ENCODE measurements at regions of chr2 and their contacts with region 1.

Region 1: DNA sequence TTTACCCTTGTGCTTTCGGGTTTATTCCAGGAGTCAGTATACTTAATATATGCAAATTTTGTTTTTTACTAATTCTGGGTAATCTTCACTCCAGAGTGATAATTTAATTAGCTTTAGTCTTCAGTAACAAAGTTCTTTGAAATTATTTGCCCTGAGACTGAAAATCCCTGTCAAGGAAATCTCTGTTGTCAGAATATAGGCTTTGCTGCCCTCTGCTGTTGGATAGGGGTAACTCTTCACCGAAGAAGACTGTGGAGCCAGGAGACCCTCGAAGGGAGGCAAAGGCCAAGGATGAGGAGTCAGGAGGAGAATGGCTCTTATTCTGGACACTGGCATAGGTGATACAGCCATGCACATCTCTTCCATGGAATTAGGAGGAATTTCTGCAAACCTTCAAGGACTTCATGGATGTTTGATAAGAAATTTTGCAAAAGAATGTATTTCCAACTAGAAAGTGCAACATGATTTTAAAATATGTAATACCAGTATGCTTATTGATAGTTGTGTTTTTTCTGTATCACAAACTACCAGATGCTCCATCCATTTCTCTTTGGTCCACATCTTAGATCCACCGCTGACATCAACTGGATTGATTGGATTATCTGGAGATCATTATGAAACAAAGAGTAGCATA is 182.3 kb downstream of the RDH14 start:
- DNase-seq: peak; percentile 19
- H3K4me3 ChIP-seq: no peak overlapping the region
- H3K27ac ChIP-seq: no peak overlapping the region
- H3K4me1 ChIP-seq: peaks cover 2% of the 10 kb centered on the region
- H3K27me3 ChIP-seq: no peaks in the 10 kb centered on the region
- CTCF ChIP-seq: peak; percentile 75 to 83

Region 2: DNA sequence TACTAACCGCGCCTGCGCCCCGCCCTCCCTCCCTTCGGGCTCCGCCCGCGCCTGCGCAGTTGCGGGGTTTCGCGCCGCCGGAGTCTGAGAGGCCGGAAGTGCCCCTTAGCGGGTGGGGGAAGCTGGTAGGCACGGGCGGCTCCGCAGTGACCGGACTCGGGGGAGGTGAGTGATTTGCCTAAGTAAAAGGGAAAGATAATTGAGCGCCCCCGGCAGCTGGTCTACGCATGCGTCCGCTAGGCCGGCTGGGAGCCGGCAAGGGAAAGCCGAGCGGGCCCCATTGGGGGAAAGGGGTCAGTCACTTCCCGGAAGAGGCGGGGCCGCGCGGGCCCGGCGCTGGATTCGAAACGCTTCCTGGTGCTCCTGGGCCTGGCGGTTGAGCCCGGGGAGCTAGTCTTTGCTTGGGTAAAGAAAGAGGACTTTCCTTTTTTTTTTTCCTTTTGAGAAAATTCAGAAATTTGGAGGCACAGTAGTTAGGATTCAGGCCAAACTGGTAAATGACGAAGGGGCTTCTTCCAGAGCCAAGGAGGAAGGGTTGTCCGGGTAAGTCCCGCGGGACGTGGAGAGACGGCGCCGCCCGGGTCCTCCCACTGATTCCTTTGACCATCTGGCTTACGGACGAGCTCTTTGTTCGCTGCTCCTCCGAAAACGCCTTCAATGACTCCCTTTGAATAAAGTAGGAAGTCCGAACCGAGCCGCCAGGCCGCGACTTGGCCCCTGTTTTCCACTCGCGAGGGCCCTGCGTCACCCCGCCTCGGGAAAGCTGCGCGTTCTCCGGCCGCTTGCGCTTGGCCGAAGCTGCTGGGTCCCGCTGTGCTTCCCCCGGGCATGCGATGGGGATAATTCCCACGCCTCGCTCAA is 624.1 kb before region 1 on chr2 and contains the starts of genes GEN1 and SMC6:
- CTCF ChIA-PET with region 1: no interaction called
- dilution Hi-C with region 1: no loop called
- in situ Hi-C with region 1: no loop called
- intact Hi-C with region 1: no loop called
- DNase-seq: peak; percentile 89
- H3K4me3 ChIP-seq: peak within 1 kb of the TSS; percentile 95 to 98 (median 97)
- H3K27ac ChIP-seq: peak within 1 kb of the TSS; percentile 94
- H3K4me1 ChIP-seq: peaks cover 27% of the 10 kb centered on the region
- H3K27me3 ChIP-seq: no peaks in the 10 kb centered on the region
- CTCF ChIP-seq: no peak
- total RNA-seq, gene GEN1: 10.0 to 27.3 TPM
- total RNA-seq, gene SMC6: 23.0 to 32.8 TPM

Region 3: GRCh38 chr2:17851731-17852585 is 526.2 kb before region 1 on chr2:
- CTCF ChIA-PET with region 1: no interaction called
- dilution Hi-C with region 1: no loop called
- in situ Hi-C with region 1: loop called (anchors 10 kb)
- intact Hi-C with region 1: loop called (anchors 1 kb)
- DNase-seq: peak; percentile 58
- H3K4me3 ChIP-seq: no peak overlapping the region
- H3K27ac ChIP-seq: no peak overlapping the region
- H3K4me1 ChIP-seq: no peaks in the 10 kb centered on the region
- H3K27me3 ChIP-seq: no peaks in the 10 kb centered on the region
- CTCF ChIP-seq: peak; percentile 90 to 91

Region 4: DNA sequence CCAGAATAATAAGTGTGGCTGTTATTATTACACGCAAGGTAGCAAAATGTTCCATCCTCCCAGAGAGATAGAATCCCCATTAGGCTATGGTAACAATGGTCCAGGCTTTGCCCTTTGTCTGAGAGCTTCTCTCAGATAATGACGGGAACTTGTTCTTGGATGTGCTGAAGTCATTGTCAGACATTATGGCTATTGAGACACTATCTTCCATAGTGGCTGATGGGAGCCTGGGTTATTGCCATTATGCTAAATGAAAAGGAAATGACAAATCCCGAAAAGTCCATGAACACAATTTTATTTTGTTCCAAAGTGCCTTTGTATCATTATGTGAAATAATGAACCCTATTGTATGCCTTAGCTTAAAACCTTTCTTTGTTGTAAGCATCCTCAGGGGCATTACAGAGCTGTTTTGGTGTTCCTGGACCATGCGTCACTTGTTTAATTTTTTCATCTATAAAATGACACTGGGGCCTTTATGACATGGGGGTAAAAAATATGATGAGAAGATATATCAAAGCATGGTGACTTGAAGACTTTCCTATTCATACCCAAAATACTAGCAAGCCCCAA is 281.2 kb before region 1 on chr2:
- CTCF ChIA-PET with region 1: no interaction called
- dilution Hi-C with region 1: no loop called
- in situ Hi-C with region 1: no loop called
- intact Hi-C with region 1: no loop called
- DNase-seq: peak; percentile 30
- H3K4me3 ChIP-seq: no peak overlapping the region
- H3K27ac ChIP-seq: no peak overlapping the region
- H3K4me1 ChIP-seq: no peaks in the 10 kb centered on the region
- H3K27me3 ChIP-seq: peaks cover 12% of the 10 kb centered on the region
- CTCF ChIP-seq: no peak

Region 5: GRCh38 chr2:18117592-18117991 is 260.5 kb before region 1 on chr2:
- CTCF ChIA-PET with region 1: no interaction called
- dilution Hi-C with region 1: no loop called
- in situ Hi-C with region 1: no loop called
- intact Hi-C with region 1: loop called (anchors 1 kb)
- DNase-seq: peak; percentile 43
- H3K4me3 ChIP-seq: no peak overlapping the region
- H3K27ac ChIP-seq: no peak overlapping the region
- H3K4me1 ChIP-seq: no peaks in the 10 kb centered on the region
- H3K27me3 ChIP-seq: no peaks in the 10 kb centered on the region
- CTCF ChIP-seq: peak; percentile 81 to 93

Region 6: GRCh38 chr2:18178736-18179349 is 199.3 kb before region 1 on chr2:
- CTCF ChIA-PET with region 1: interaction called, 6 read pairs
- dilution Hi-C with region 1: no loop called
- in situ Hi-C with region 1: no loop called
- intact Hi-C with region 1: loop called (anchors 1 kb)
- DNase-seq: peak; percentile 26
- H3K4me3 ChIP-seq: no peak overlapping the region
- H3K27ac ChIP-seq: no peak overlapping the region
- H3K4me1 ChIP-seq: no peaks in the 10 kb centered on the region
- H3K27me3 ChIP-seq: no peaks in the 10 kb centered on the region
- CTCF ChIP-seq: peak; percentile 84 to 86

Region 7: DNA sequence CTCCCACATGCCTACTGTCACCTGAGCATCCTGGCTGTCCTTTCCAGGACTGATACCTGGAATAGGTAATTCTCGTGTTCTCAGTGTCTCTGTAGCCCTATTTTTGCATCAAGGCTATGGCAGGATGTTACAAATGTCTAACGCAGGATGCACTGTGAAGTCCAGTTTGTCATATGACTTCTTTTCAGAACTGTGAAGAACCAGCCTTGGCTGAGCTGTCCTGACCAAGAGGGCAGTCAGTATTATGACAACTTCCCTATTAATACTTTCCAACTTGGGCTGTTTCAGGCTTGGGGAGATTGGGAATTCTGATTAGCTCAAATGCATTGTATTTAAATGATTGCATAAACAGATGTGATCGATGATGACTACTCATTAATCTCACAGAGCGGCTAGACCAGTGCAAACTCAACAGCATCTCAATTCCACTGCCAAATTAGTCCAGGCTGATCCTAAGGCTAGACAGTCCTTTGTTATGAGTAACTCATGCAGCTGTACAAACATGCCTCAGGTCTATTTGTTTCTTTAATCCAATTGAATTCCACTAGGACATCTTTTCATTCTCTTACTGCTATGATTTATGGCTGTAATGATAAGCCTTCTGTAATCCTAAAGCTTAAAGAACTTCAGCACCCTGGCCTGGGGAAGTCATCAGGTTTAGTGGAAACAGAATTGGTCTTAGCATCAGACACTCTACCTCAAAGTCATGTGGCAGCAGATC is 168.1 kb before region 1 on chr2:
- CTCF ChIA-PET with region 1: no interaction called
- dilution Hi-C with region 1: no loop called
- in situ Hi-C with region 1: loop called (anchors 10 to 25 kb)
- intact Hi-C with region 1: no loop called
- DNase-seq: peak; percentile 88
- H3K4me3 ChIP-seq: no peak overlapping the region
- H3K27ac ChIP-seq: no peak overlapping the region
- H3K4me1 ChIP-seq: peaks cover 16% of the 10 kb centered on the region
- H3K27me3 ChIP-seq: no peaks in the 10 kb centered on the region
- CTCF ChIP-seq: no peak

Region 8: GRCh38 chr2:18219676-18220075 is 158.5 kb before region 1 on chr2:
- CTCF ChIA-PET with region 1: no interaction called
- dilution Hi-C with region 1: no loop called
- in situ Hi-C with region 1: loop called (anchors 10 to 25 kb)
- intact Hi-C with region 1: loop called (anchors 1 kb)
- DNase-seq: no peak
- H3K4me3 ChIP-seq: no peak overlapping the region
- H3K27ac ChIP-seq: no peak overlapping the region
- H3K4me1 ChIP-seq: peaks cover 3% of the 10 kb centered on the region
- H3K27me3 ChIP-seq: no peaks in the 10 kb centered on the region
- CTCF ChIP-seq: peak; percentile 29 to 57

Region 9: DNA sequence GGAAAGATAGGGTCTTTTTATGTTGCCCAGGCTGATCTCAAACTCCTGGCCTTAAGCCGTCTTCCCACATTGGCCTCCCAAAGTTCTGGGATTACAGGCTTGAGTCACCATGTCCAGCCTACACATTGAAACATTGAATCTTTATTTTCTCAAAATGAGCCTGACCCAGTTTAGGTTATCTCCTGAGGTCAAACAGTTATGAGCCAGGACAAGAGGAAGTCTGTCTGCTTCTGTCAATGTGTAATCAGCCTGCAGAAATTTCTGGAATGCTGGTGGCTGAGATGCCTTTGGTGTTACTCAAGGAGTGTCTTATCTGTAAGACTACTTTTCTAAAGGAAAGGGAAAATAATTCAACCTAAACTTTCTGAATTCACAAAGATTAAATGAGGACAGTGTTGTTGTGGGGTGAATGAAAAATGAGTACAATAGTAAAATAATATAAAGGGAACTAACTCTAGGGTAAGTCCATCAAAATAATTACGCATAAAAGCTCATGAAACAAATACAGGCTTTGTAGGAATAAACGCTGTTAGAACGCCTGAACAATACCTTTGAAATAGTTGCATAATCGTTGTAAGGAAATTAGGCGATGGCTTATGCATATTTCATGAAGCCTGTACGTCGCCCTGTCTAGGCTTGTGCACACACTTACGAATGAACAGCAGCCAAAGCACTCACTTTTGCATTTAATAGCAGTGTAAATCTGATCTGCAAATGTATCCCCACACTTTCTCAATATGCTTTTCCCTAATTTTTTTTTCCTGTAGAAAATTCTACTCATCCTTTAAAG is 78.5 kb before region 1 on chr2:
- CTCF ChIA-PET with region 1: no interaction called
- dilution Hi-C with region 1: no loop called
- in situ Hi-C with region 1: no loop called
- intact Hi-C with region 1: loop called (anchors 2 kb)
- DNase-seq: peak; percentile 84
- H3K4me3 ChIP-seq: peak overlapping the region in 2 of 3 experiments; percentile 40 to 53
- H3K27ac ChIP-seq: peak overlapping the region; percentile 77
- H3K4me1 ChIP-seq: peaks cover 32% of the 10 kb centered on the region
- H3K27me3 ChIP-seq: no peaks in the 10 kb centered on the region
- CTCF ChIP-seq: no peak

Measured in mammary epithelial cell (primary cell).